Activated CD8-positive, alpha-beta T cell treated with anti-CD3 and anti-CD28 coated beads, Interleukin-2, amount 10 ng/mL, durations not matched to agents 7 days and 5 days (primary cell): ENCODE measurements at regions of chr1 and their contacts with region 1.

Region 1: GRCh38 chr1:226424228-226425003 is 16.5 kb upstream of the PARP1 start:
- DNase-seq: no peak
- ATAC-seq: peak; percentile 69
- H3K4me3 Mint-ChIP-seq: no peak overlapping the region
- H3K27ac Mint-ChIP-seq: no peak overlapping the region
- H3K4me1 Mint-ChIP-seq: peaks cover 20% of the 10 kb centered on the region
- H3K27me3 Mint-ChIP-seq: peaks cover 3% of the 10 kb centered on the region

Region 2: GRCh38 chr1:226371027-226371694 is 53.3 kb before region 1 on chr1:
- CTCF ChIA-PET with region 1: no interaction called
- POLR2A ChIA-PET with region 1: no interaction called
- DNase-seq: no peak
- ATAC-seq: no peak
- H3K4me3 Mint-ChIP-seq: no peak overlapping the region
- H3K27ac Mint-ChIP-seq: no peak overlapping the region
- H3K4me1 Mint-ChIP-seq: no peaks in the 10 kb centered on the region
- H3K27me3 Mint-ChIP-seq: no peaks in the 10 kb centered on the region

Region 3: GRCh38 chr1:226407497-226408284 is 16.7 kb before region 1 on chr1 and contains the start of gene PARP1:
- CTCF ChIA-PET with region 1: interaction called, 60 read pairs
- POLR2A ChIA-PET with region 1: interaction called, 4 read pairs
- DNase-seq: peak; percentile 90
- ATAC-seq: peak; percentile 90
- H3K4me3 Mint-ChIP-seq: peak within 1 kb of the TSS; percentile 98
- H3K27ac Mint-ChIP-seq: peak within 1 kb of the TSS; percentile 97
- H3K4me1 Mint-ChIP-seq: peaks cover 41% of the 10 kb centered on the region
- H3K27me3 Mint-ChIP-seq: peaks cover 3% of the 10 kb centered on the region
- total RNA-seq, gene PARP1: 139 to 145 TPM

Region 4: DNA sequence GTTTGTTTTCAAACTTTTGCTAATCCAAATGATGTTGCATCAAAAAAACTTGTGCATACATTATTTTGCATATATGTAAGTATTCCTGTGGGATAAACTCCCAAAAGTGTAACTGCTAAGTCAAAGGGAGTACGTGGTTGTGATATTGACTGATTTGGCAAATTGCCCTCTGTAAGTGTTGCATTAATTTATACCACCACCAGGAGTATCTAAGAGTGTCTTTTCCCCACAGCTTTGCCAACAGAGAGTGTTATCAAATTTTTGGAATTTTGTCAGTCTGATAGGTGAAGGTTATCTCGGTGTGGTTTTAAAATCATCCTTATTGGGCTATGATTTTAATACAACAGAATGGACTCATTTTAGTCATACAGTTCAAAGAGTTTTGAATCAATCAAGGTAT is 13.6 kb after region 1 on chr1:
- CTCF ChIA-PET with region 1: interaction called, 13 read pairs
- POLR2A ChIA-PET with region 1: no interaction called
- DNase-seq: no peak
- ATAC-seq: no peak
- H3K4me3 Mint-ChIP-seq: no peak overlapping the region
- H3K27ac Mint-ChIP-seq: no peak overlapping the region
- H3K4me1 Mint-ChIP-seq: peaks cover under 1% of the 10 kb centered on the region
- H3K27me3 Mint-ChIP-seq: peaks cover 40% of the 10 kb centered on the region

Region 5: DNA sequence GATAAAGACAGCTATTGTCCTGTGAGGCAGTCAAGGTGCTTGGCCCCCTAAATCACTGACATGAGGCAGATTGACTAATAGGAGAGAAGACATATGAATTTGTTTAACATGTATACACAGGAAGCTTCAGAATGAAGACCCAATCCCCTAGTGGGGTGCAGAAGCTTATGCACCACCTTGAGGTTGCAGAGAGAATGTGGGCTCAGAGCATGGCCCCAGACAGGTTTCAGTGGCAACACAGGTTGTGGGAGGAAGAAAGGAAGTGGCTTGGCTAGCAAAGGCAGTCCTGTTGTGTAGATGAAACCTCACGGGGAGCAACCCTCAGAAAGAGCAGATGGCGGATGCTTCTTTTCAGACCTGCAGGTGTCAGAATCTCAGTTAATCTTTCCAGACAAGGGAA is 20.5 kb after region 1 on chr1:
- CTCF ChIA-PET with region 1: interaction called, 18 read pairs
- POLR2A ChIA-PET with region 1: interaction called, 3 read pairs
- DNase-seq: peak; percentile 90
- ATAC-seq: peak; percentile 100
- H3K4me3 Mint-ChIP-seq: peak overlapping the region; percentile 2
- H3K27ac Mint-ChIP-seq: peak overlapping the region; percentile 50
- H3K4me1 Mint-ChIP-seq: peaks cover 32% of the 10 kb centered on the region
- H3K27me3 Mint-ChIP-seq: peaks cover 45% of the 10 kb centered on the region

Region 6: GRCh38 chr1:226457307-226457712 is 32.9 kb after region 1 on chr1:
- CTCF ChIA-PET with region 1: interaction called, 26 read pairs
- POLR2A ChIA-PET with region 1: no interaction called
- DNase-seq: peak; percentile 61
- ATAC-seq: peak; percentile 86
- H3K4me3 Mint-ChIP-seq: peak overlapping the region; percentile 68
- H3K27ac Mint-ChIP-seq: peak overlapping the region; percentile 77
- H3K4me1 Mint-ChIP-seq: peaks cover 15% of the 10 kb centered on the region
- H3K27me3 Mint-ChIP-seq: peaks cover 25% of the 10 kb centered on the region

Region 7: DNA sequence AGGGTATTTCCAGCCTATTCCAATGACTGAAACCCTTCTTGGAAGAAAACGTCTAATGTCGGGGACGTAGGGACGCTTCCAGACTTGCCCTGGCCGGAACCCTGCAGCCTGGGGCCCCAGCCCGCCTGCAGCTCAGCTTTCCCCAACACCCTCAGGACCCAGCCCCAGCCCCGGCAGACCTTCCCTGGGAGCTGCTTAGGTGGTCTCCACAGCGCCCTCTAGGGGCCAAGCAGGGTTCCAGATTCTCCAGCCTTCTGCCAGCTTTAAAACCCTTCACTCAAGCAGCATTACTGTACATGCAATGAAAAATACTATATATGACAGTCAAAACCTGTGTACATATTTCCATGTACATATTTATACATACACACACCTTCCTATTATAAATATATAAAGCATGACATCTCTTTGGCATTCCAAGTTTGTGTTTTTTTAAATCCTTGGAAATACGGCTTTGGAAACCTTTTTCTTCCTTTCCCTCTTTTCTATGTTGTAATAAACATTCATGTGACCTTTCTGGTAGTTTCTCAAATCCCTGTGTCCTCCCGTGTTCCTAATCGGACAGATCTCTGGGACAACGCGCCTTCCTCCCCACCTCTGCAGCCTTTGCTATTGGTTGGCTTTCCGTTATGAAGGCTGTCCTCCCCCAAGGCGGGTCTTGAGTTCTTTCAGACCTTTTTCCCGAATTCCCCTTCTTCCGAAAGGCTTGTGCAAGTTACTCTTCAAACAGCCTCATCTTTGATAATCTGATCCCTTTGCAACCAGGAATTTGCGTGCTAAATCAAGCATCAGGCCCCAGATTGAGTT is 184.5 kb after region 1 on chr1:
- CTCF ChIA-PET with region 1: interaction called, 14 read pairs
- POLR2A ChIA-PET with region 1: no interaction called
- DNase-seq: peak; percentile 73
- ATAC-seq: peak; percentile 83
- H3K4me3 Mint-ChIP-seq: no peak overlapping the region
- H3K27ac Mint-ChIP-seq: no peak overlapping the region
- H3K4me1 Mint-ChIP-seq: no peaks in the 10 kb centered on the region
- H3K27me3 Mint-ChIP-seq: peaks cover 3% of the 10 kb centered on the region

Region 8: DNA sequence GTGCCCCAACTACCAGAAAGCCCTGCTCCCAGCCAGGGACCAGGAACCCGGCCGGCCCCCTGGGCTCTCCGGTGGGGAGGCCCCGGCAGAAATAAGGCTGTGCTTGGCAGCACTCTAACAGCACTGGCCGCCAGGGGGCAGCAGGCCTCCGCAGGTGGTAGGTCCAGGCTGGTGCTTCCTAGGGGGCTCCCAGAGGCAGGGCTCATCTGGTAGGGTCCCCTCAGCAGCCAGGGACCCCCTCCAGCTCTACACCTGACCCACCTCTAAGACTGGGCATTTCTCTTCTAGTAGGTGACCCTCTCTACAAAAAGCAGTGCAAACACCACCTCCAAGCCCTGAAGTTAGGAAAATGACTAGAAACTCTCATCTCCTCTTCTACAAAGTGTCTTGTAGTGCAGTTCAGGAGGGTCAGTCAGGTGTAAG is 209.8 kb after region 1 on chr1:
- CTCF ChIA-PET with region 1: interaction called, 12 read pairs
- POLR2A ChIA-PET with region 1: no interaction called
- DNase-seq: peak; percentile 84
- ATAC-seq: peak; percentile 78
- H3K4me3 Mint-ChIP-seq: no peak overlapping the region
- H3K27ac Mint-ChIP-seq: peak overlapping the region; percentile 65
- H3K4me1 Mint-ChIP-seq: peaks cover 44% of the 10 kb centered on the region
- H3K27me3 Mint-ChIP-seq: no peaks in the 10 kb centered on the region